Naive thymus-derived CD4-positive, alpha-beta T cell (primary cell): ENCODE measurements at regions of chr9 and their contacts with region 1.

Region 1: DNA sequence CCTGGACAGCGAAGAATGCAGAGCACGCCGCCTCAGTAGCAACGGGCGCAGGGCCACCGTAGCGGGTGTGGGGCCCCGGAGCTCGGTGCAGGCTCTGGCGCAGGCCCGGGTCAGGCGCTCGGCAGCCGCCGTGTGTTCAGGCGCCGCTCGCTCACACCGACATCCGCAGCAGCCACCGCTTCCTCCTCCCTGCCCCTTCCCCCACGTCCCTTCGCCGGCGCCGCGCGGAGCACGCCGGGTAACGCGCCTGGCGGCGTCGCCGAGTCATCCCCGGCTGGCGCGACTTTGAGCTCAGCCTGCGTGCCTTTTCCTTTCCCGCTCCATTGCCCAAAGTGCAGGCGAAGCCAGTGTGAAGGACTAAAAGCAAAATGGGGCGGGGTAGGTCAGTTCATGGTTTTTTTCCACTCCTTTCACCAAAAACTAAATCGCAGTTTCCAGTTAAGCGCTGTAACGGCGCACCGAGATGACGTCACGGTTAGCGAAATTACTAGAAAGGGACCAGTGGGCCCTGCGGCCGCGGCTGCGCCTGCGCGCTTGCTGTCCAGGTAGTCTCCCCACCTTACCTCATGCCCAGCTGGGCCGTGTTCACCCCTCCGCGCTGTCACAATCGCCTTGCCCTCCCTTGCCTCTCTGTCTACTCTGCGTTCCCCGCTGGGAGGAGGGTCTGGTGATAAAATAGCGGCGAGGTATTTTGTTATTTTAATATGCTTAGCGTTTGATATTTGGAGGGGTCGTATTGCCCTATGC is at the start of gene UBQLN1:
- DNase-seq: peak; percentile 91 to 97 (median 95)
- ATAC-seq: peak; percentile 91
- H3K4me3 ChIP-seq: peak within 1 kb of the TSS; percentile 79
- H3K4me3 Mint-ChIP-seq: peak within 1 kb of the TSS; percentile 81 to 99 (median 87)
- H3K27ac ChIP-seq: peak within 1 kb of the TSS; percentile 93
- H3K27ac Mint-ChIP-seq: peak within 1 kb of the TSS; percentile 95 to 100 (median 100)
- H3K4me1 ChIP-seq: peaks cover 27% of the 10 kb centered on the region in 2 donors
- H3K4me1 Mint-ChIP-seq: peaks cover 30 to 55% (median 49%) of the 10 kb centered on the region in 7 donors
- H3K27me3 ChIP-seq: no peaks in the 10 kb centered on the region
- H3K27me3 Mint-ChIP-seq: peaks cover 0 to 6% (median 0%) of the 10 kb centered on the region in 5 donors
- total RNA-seq, gene UBQLN1: 104 to 139 (median 114) TPM

Region 2: GRCh38 chr9:83473488-83473971 is 234.4 kb before region 1 on chr9:
- CTCF ChIA-PET with region 1: no interaction called
- POLR2A ChIA-PET with region 1: no interaction called
- intact Hi-C with region 1: loop called in 1 of 2 experiments (anchors 2 kb)
- DNase-seq: no peak
- ATAC-seq: peak; percentile 68
- H3K4me3 ChIP-seq: no peak overlapping the region
- H3K4me3 Mint-ChIP-seq: peak overlapping the region; percentile 4 to 81 (median 59)
- H3K27ac ChIP-seq: peak overlapping the region; percentile 42
- H3K27ac Mint-ChIP-seq: peak overlapping the region; percentile 7 to 89 (median 69)
- H3K4me1 ChIP-seq: peaks cover 0 to 2% of the 10 kb centered on the region in 2 donors
- H3K4me1 Mint-ChIP-seq: peaks cover 10 to 19% (median 17%) of the 10 kb centered on the region in 7 donors
- H3K27me3 ChIP-seq: no peaks in the 10 kb centered on the region
- H3K27me3 Mint-ChIP-seq: peaks cover 0 to 23% (median 0%) of the 10 kb centered on the region in 5 donors

Region 3: GRCh38 chr9:83622939-83623678 is 84.8 kb before region 1 on chr9 and contains the start of gene IDNK:
- CTCF ChIA-PET with region 1: interaction called, 4 read pairs
- POLR2A ChIA-PET with region 1: interaction called, 44 read pairs
- intact Hi-C with region 1: loop called (anchors 1 kb)
- DNase-seq: peak; percentile 52 to 76 (median 64)
- ATAC-seq: peak; percentile 90
- H3K4me3 ChIP-seq: peak within 1 kb of the TSS; percentile 59
- H3K4me3 Mint-ChIP-seq: peak within 1 kb of the TSS; percentile 90 to 96 (median 96)
- H3K27ac ChIP-seq: peak within 1 kb of the TSS; percentile 83
- H3K27ac Mint-ChIP-seq: peak within 1 kb of the TSS; percentile 74 to 98 (median 96)
- H3K4me1 ChIP-seq: peaks cover 8 to 11% of the 10 kb centered on the region in 2 donors
- H3K4me1 Mint-ChIP-seq: peaks cover 21 to 51% (median 30%) of the 10 kb centered on the region in 7 donors
- H3K27me3 ChIP-seq: no peaks in the 10 kb centered on the region
- H3K27me3 Mint-ChIP-seq: peaks cover 0 to 14% (median 0%) of the 10 kb centered on the region in 5 donors
- total RNA-seq, gene IDNK: 8.5 to 11.3 (median 10.9) TPM

Region 4: DNA sequence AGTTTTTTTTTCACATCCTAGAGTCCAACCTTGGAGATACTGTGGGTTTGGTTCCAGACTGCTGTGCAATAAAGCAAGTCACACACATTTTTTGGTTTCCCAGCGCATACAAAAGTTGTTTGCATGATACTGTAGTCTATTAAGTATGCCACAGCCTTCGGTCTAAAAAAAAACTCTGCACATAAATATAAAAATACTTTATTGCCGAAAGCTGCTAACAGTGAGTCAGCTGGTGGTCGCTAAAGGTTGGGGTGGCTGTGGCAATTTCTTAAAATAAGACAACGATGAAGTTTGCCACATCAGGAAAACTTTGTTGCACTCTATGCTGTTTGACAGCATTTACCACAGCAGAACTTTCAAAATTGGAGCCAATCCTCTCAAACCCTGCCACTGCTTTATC is 37.6 kb before region 1 on chr9:
- CTCF ChIA-PET with region 1: interaction called, 3 read pairs
- POLR2A ChIA-PET with region 1: interaction called, 6 read pairs
- intact Hi-C with region 1: loop called (anchors 2 to 5 kb)
- DNase-seq: no peak
- ATAC-seq: no peak
- H3K4me3 ChIP-seq: no peak overlapping the region
- H3K4me3 Mint-ChIP-seq: no peak overlapping the region
- H3K27ac ChIP-seq: no peak overlapping the region
- H3K27ac Mint-ChIP-seq: peak overlapping the region in 1 of 9 donors; percentile 60
- H3K4me1 ChIP-seq: no peaks in the 10 kb centered on the region
- H3K4me1 Mint-ChIP-seq: peaks cover 10 to 45% (median 25%) of the 10 kb centered on the region in 7 donors
- H3K27me3 ChIP-seq: no peaks in the 10 kb centered on the region
- H3K27me3 Mint-ChIP-seq: no peaks in the 10 kb centered on the region

Region 5: GRCh38 chr9:83675466-83675865 is 32.5 kb before region 1 on chr9:
- CTCF ChIA-PET with region 1: no interaction called
- POLR2A ChIA-PET with region 1: interaction called, 6 read pairs
- intact Hi-C with region 1: loop called (anchors 2 to 5 kb)
- DNase-seq: no peak
- ATAC-seq: no peak
- H3K4me3 ChIP-seq: no peak overlapping the region
- H3K4me3 Mint-ChIP-seq: no peak overlapping the region
- H3K27ac ChIP-seq: no peak overlapping the region
- H3K27ac Mint-ChIP-seq: peak overlapping the region in 3 of 9 donors; percentile 3 to 19 (median 19)
- H3K4me1 ChIP-seq: no peaks in the 10 kb centered on the region
- H3K4me1 Mint-ChIP-seq: peaks cover 0 to 19% (median 17%) of the 10 kb centered on the region in 7 donors
- H3K27me3 ChIP-seq: no peaks in the 10 kb centered on the region
- H3K27me3 Mint-ChIP-seq: no peaks in the 10 kb centered on the region

Region 6: GRCh38 chr9:83688921-83689320 is 19.0 kb before region 1 on chr9:
- CTCF ChIA-PET with region 1: no interaction called
- POLR2A ChIA-PET with region 1: interaction called, 16 read pairs
- intact Hi-C with region 1: loop called (anchors 1 to 2 kb)
- DNase-seq: no peak
- ATAC-seq: no peak
- H3K4me3 ChIP-seq: no peak overlapping the region
- H3K4me3 Mint-ChIP-seq: peak overlapping the region in 6 of 10 donors; percentile 20 to 64 (median 60)
- H3K27ac ChIP-seq: no peak overlapping the region
- H3K27ac Mint-ChIP-seq: peak overlapping the region in 5 of 9 donors; percentile 25 to 76 (median 61)
- H3K4me1 ChIP-seq: peaks cover 14 to 17% of the 10 kb centered on the region in 2 donors
- H3K4me1 Mint-ChIP-seq: peaks cover 50 to 86% (median 79%) of the 10 kb centered on the region in 7 donors
- H3K27me3 ChIP-seq: no peaks in the 10 kb centered on the region
- H3K27me3 Mint-ChIP-seq: no peaks in the 10 kb centered on the region

Region 7: DNA sequence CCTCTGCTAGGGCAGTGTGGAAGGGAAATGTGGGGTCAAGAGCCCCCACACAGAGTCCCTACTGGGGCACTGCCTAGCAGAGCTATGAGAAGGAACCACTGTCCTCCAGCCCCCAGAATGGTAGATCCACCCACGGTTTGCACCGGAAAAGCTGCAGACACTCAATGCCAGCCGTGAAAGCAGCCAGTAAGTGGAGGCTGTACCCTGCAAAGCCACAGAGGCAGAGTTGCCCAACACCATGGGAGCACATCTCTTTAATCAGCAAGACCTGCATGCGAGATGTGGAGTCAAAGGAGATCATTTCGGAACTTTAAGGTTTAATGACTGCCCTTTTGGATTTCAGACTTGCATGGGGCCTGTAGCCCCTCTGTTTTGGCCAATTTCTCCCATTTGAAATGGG is 57.4 kb after region 1 on chr9:
- CTCF ChIA-PET with region 1: no interaction called
- POLR2A ChIA-PET with region 1: no interaction called
- intact Hi-C with region 1: no loop called
- DNase-seq: no peak
- ATAC-seq: no peak
- H3K4me3 ChIP-seq: no peak overlapping the region
- H3K4me3 Mint-ChIP-seq: no peak overlapping the region
- H3K27ac ChIP-seq: no peak overlapping the region
- H3K27ac Mint-ChIP-seq: no peak overlapping the region
- H3K4me1 ChIP-seq: no peaks in the 10 kb centered on the region
- H3K4me1 Mint-ChIP-seq: no peaks in the 10 kb centered on the region
- H3K27me3 ChIP-seq: no peaks in the 10 kb centered on the region
- H3K27me3 Mint-ChIP-seq: peaks cover 0 to 3% (median 0%) of the 10 kb centered on the region in 5 donors

Region 8: DNA sequence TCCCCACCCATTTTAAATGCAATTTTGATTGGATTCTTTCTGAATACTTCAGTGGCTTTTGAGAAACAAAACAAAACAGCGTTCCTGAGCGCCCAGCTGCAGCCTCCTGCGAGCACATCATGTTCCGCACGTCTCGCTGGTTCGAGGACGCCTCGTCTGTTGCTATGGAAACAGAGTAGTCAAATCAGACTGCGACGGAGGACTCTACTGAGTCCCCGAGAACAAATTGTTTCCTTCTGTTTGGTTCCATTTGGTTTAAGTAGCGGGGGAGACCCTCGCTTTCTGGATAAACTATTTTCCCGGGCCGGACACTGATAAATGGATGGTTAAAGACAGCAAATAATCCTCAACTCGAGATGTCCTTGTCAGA is 563.6 kb after region 1 on chr9:
- CTCF ChIA-PET with region 1: no interaction called
- POLR2A ChIA-PET with region 1: no interaction called
- intact Hi-C with region 1: loop called in 1 of 2 experiments (anchors 5 kb)
- DNase-seq: peak in 6 of 9 donors; percentile 35 to 57 (median 47)
- ATAC-seq: peak; percentile 64
- H3K4me3 ChIP-seq: no peak overlapping the region
- H3K4me3 Mint-ChIP-seq: peak overlapping the region in 9 of 10 donors; percentile 42 to 82 (median 64)
- H3K27ac ChIP-seq: no peak overlapping the region
- H3K27ac Mint-ChIP-seq: peak overlapping the region in 4 of 9 donors; percentile 4 to 79 (median 38)
- H3K4me1 ChIP-seq: peaks cover 0 to 7% of the 10 kb centered on the region in 2 donors
- H3K4me1 Mint-ChIP-seq: peaks cover 0 to 34% (median 9%) of the 10 kb centered on the region in 7 donors
- H3K27me3 ChIP-seq: no peaks in the 10 kb centered on the region
- H3K27me3 Mint-ChIP-seq: peaks cover 17 to 55% (median 41%) of the 10 kb centered on the region in 5 donors